T-cell (primary cell): ENCODE measurements at regions of chr2 and their contacts with region 1.

Region 1: DNA sequence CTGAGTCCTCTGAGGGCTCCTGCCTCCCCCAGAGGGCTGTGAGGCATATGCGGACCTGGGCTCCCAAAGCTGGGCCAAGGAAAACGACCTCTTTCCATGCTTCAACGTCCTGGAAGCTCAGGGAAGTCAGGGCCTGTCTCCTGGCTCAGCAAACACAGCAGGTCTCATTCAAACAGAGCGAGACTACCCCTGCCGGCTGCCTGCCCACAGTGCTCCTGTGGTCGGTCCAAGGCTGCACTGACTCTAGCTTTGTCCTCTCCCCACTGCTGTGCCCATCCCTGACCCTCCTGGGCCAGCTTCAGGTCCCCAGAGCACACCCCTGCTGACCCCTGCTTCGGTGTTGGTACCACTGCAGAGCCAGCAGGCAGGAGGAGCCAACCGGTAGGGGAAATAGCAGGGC is 79.6 kb downstream of the PDCL3 start:
- DNase-seq: no peak
- ATAC-seq: no peak
- H3K4me3 ChIP-seq: no peak overlapping the region
- H3K4me3 Mint-ChIP-seq: no peak overlapping the region
- H3K27ac ChIP-seq: no peak overlapping the region
- H3K27ac Mint-ChIP-seq: no peak overlapping the region
- H3K4me1 ChIP-seq: peaks cover 27 to 59% of the 10 kb centered on the region in 2 experiments
- H3K4me1 Mint-ChIP-seq: peaks cover 55 to 67% (median 60%) of the 10 kb centered on the region in 3 donors
- H3K27me3 ChIP-seq: no peaks in the 10 kb centered on the region
- H3K27me3 Mint-ChIP-seq: no peaks in the 10 kb centered on the region

Region 2: GRCh38 chr2:100820422-100821254 is 178.2 kb after region 1 on chr2:
- CTCF ChIA-PET with region 1: interaction called in 1 of 2 experiments, 14 read pairs
- POLR2A ChIA-PET with region 1: no interaction called
- DNase-seq: peak in 3 of 35 experiments; percentile 3 to 15 (median 10)
- ATAC-seq: peak; percentile 6 to 20 (median 16)
- H3K4me3 ChIP-seq: peak overlapping the region; percentile 48 to 61
- H3K4me3 Mint-ChIP-seq: peak overlapping the region; percentile 73 to 74 (median 74)
- H3K27ac ChIP-seq: no peak overlapping the region
- H3K27ac Mint-ChIP-seq: no peak overlapping the region
- H3K4me1 ChIP-seq: peaks cover 2 to 22% of the 10 kb centered on the region in 2 experiments
- H3K4me1 Mint-ChIP-seq: peaks cover 15 to 21% (median 20%) of the 10 kb centered on the region in 3 donors
- H3K27me3 ChIP-seq: peaks cover 2 to 33% of the 10 kb centered on the region in 2 experiments
- H3K27me3 Mint-ChIP-seq: peaks cover 37 to 52% of the 10 kb centered on the region in 2 donors